ENCODE measurements at regions of chr10 and their contacts with region 1.

Region 1: DNA sequence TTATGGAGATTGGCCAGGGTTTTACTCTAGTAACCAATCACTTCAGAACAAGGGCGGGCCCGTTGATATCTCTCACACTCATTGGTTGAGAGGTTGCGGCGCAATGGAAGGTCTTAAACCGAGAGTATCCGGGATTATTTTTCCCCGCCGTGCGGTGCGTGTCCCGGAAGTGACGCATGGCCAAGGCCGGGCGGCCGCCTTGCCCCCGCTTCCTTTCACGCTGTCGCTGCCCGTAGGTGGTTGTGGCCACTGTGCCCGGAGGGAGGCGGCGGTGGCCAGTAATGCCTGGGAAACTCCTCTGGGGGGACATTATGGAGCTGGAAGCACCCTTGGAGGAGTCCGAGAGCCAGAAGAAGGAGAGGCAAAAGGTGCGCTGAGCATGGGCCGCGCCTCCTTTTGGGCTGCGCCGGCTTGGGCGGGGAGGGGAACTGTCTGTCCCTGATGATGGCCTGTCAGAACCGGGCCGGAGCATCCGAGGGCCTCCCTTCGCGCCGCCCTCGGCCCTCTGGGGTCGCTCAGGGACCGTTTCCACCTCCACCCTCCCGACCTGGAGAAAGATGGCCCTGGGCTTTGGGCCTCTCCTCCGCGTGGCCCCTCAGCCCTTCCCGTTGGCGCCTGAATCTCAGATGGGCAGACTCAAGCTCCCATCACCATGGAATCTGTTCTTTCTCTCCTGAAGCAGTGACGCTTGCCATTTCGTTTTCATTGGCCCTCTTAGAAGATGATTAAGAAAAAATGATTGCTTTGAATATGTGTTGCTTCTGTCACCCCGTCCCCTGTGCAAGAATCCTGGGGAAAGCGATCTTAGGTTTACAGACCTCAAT is at the start of gene DDX50:
- ATAC-seq: peak; percentile 90 to 96 (median 93)
- H3K4me3 ChIP-seq: peak within 1 kb of the TSS; percentile 73 to 88 (median 80)
- H3K27ac ChIP-seq: peak within 1 kb of the TSS; percentile 98 to 99
- H3K4me1 ChIP-seq: peaks cover 9 to 16% of the 10 kb centered on the region in 2 donors
- total RNA-seq, gene DDX50: 38.5 to 65.7 (median 52.9) TPM

Region 2: GRCh38 chr10:68526626-68527307 is 374.5 kb before region 1 on chr10:
- in situ Hi-C with region 1: loop called in 1 of 9 experiments (anchors 25 kb)
- ATAC-seq: peak; percentile 58 to 84 (median 78)
- H3K4me3 ChIP-seq: peak overlapping the region; percentile 83 to 97 (median 95)
- H3K27ac ChIP-seq: peak overlapping the region; percentile 84 to 87
- H3K4me1 ChIP-seq: peaks cover 0 to 10% of the 10 kb centered on the region in 2 donors

Region 3: GRCh38 chr10:68727146-68727545 is 174.2 kb before region 1 on chr10:
- in situ Hi-C with region 1: loop called in 1 of 9 experiments (anchors 25 kb)
- ATAC-seq: no peak
- H3K4me3 ChIP-seq: no peak overlapping the region
- H3K27ac ChIP-seq: no peak overlapping the region
- H3K4me1 ChIP-seq: peaks cover 0 to 4% of the 10 kb centered on the region in 2 donors

Region 4: DNA sequence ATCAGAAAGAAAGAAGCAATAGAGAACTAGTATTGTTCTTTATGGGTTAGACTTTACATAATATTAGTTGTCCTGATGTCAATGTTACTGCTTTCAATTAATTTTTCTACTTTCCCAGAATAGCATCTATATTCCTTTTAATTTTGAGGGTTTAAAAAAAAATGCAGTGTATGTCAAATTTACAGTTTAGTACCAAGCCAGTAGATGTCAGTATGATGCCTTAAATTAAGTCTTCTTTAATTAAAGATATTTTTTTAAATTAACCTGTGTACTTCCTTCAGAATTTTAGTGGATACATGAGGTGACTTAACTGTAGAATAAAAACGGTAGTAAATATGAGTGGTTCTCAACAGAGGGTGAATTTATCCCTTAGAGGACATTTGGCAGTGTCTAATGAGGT is 109.2 kb before region 1 on chr10:
- in situ Hi-C with region 1: loop called in 3 of 9 experiments (anchors 10 to 25 kb)
- ATAC-seq: no peak
- H3K4me3 ChIP-seq: no peak overlapping the region
- H3K27ac ChIP-seq: no peak overlapping the region
- H3K4me1 ChIP-seq: no peaks in the 10 kb centered on the region

Region 5: GRCh38 chr10:69107699-69108098 is 206.4 kb after region 1 on chr10:
- in situ Hi-C with region 1: no loop called
- ATAC-seq: no peak
- H3K4me3 ChIP-seq: no peak overlapping the region
- H3K27ac ChIP-seq: no peak overlapping the region
- H3K4me1 ChIP-seq: no peaks in the 10 kb centered on the region